H1 (cell line): ENCODE measurements at regions of chr19 and their contacts with region 1.

Region 1: DNA sequence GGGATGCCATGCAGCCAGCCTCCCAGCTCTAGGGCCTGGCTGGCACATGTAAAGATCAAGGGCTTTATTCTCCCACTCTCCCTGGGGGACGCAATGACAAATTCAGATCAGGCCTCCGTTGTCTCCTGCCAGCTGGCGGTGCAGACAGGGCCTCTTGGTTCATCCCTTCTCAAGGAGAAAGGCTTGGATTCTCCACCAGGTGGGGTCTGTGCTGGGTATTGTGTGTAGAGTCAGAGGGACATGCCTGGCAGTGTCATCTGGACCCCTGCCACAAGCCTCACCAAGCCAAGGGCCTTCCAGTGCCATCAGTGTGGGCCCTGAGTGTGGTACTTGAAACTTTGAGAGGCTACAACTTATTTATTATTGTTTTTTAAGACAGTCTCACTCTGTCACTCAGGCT is 8.4 kb upstream of the PTPRS start:
- DNase-seq: no peak
- H3K4me3 ChIP-seq: no peak overlapping the region
- H3K27ac ChIP-seq: no peak overlapping the region
- H3K4me1 ChIP-seq: peaks cover 0 to 6% (median 2%) of the 10 kb centered on the region in 4 experiments; a peak in 3 of 7 replicates
- H3K27me3 ChIP-seq: peaks cover 0 to 7% (median 2%) of the 10 kb centered on the region in 4 experiments; a peak in 4 of 7 replicates
- CTCF ChIP-seq: peak; percentile 26 to 46 (median 28); a peak in 2 of 4 replicates
- EP300 ChIP-seq: no peak
- POLR2A ChIP-seq: no peak
- RAD21 ChIP-seq: no peak; a peak in 2 of 4 replicates

Region 2: DNA sequence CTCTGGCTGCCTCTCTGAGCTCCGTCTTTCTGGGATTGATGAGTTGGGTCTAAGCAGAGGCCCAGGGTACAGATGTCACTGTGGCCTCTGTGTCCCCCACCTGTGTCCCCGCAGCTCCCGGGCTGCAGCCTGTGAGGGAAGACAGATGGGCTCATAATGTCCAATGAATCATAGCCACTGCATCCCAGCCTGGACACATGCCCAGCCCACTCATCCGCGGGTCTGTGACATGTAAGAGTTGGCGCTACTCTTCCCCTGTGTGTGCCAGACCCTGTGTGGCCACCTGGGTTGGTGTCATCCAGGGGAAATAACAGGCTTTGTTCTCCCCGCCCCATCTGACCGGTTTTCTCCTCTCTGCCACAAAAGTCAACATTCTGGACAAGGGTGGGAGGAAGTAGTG is 11.4 kb after region 1 on chr19:
- CTCF ChIA-PET with region 1: interaction called, 6 read pairs
- POLR2A ChIA-PET with region 1: interaction called, 18 read pairs
- DNase-seq: no peak
- H3K4me3 ChIP-seq: no peak overlapping the region
- H3K27ac ChIP-seq: no peak overlapping the region
- H3K4me1 ChIP-seq: peaks cover 0 to 4% (median 3%) of the 10 kb centered on the region in 4 experiments; a peak in 5 of 7 replicates
- H3K27me3 ChIP-seq: peaks cover 0 to 3% (median 0%) of the 10 kb centered on the region in 4 experiments; a peak in 1 of 7 replicates
- CTCF ChIP-seq: no peak
- EP300 ChIP-seq: no peak
- POLR2A ChIP-seq: no peak
- RAD21 ChIP-seq: no peak